ENCODE measurements at regions of chr1 and their contacts with region 1.

Region 1: DNA sequence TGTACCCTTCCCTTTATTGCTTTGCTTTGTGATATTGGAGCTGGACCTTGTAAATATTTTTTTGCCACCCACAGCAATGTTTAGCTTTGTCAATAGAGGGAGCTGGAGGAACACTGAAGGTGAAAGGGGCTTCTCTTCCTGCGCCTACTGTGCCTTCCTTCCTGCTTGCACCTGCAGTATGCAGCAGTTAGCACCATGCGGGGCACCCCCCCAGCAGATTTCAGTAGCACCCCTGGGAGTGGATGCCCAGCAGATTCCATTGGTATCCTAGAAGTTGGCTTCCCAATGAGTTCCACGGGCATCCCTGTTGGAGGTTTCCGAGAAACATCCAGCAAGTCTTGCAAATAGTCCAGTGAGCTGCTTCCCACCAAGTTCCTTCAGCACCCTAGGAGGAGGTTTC is 25.6 kb downstream of the S100A10 start:
- DNase-seq: peak; percentile 69
- ATAC-seq: peak; percentile 88
- H3K4me3 Mint-ChIP-seq: no peak overlapping the region
- H3K27ac Mint-ChIP-seq: no peak overlapping the region
- H3K4me1 Mint-ChIP-seq: peaks cover 22% of the 10 kb centered on the region
- H3K27me3 Mint-ChIP-seq: peaks cover 5% of the 10 kb centered on the region
- CTCF ChIP-seq: peak; percentile 81

Region 2: GRCh38 chr1:151945725-151946364 is 22.2 kb before region 1 on chr1:
- CTCF ChIA-PET with region 1: interaction called, 16 read pairs
- POLR2A ChIA-PET with region 1: interaction called, 4 read pairs
- intact Hi-C with region 1: no loop called
- DNase-seq: peak; percentile 90
- ATAC-seq: peak; percentile 65
- H3K4me3 Mint-ChIP-seq: peak overlapping the region; percentile 14
- H3K27ac Mint-ChIP-seq: peak overlapping the region; percentile 73
- H3K4me1 Mint-ChIP-seq: peaks cover 47% of the 10 kb centered on the region
- H3K27me3 Mint-ChIP-seq: no peaks in the 10 kb centered on the region
- CTCF ChIP-seq: no peak

Region 3: GRCh38 chr1:151993654-151994496 is 25.8 kb after region 1 on chr1 and contains the start of gene S100A10:
- CTCF ChIA-PET with region 1: interaction called, 321 read pairs
- POLR2A ChIA-PET with region 1: interaction called, 6 read pairs
- intact Hi-C with region 1: loop called (anchors 1 kb)
- DNase-seq: peak; percentile 84
- ATAC-seq: peak; percentile 73
- H3K4me3 Mint-ChIP-seq: peak within 1 kb of the TSS; percentile 97
- H3K27ac Mint-ChIP-seq: peak within 1 kb of the TSS; percentile 97
- H3K4me1 Mint-ChIP-seq: peaks cover 52% of the 10 kb centered on the region
- H3K27me3 Mint-ChIP-seq: no peaks in the 10 kb centered on the region
- CTCF ChIP-seq: no peak
- total RNA-seq, gene S100A10: 208 to 220 TPM

Region 4: GRCh38 chr1:152026895-152027294 is 58.8 kb after region 1 on chr1:
- CTCF ChIA-PET with region 1: no interaction called
- POLR2A ChIA-PET with region 1: no interaction called
- intact Hi-C with region 1: no loop called
- DNase-seq: no peak
- ATAC-seq: no peak
- H3K4me3 Mint-ChIP-seq: no peak overlapping the region
- H3K27ac Mint-ChIP-seq: no peak overlapping the region
- H3K4me1 Mint-ChIP-seq: peaks cover 19% of the 10 kb centered on the region
- H3K27me3 Mint-ChIP-seq: peaks cover 1% of the 10 kb centered on the region
- CTCF ChIP-seq: no peak

Measured in activated CD8-positive, alpha-beta T cell treated with anti-CD3 and anti-CD28 coated beads for 36 hours (primary cell).